Esophagus squamous epithelium (tissue), 5 donors: ENCODE measurements at regions of chr15 and their contacts with region 1.

Region 1: GRCh38 chr15:98779463-98780071 is 131.2 kb downstream of the IGF1R start:
- DNase-seq: no peak
- H3K4me3 ChIP-seq: no peak overlapping the region
- H3K27ac ChIP-seq: peak overlapping the region in 3 of 4 donors; percentile 3 to 34 (median 14)
- H3K4me1 ChIP-seq: peaks cover 7 to 57% (median 32%) of the 10 kb centered on the region in 3 donors
- H3K27me3 ChIP-seq: no peaks in the 10 kb centered on the region
- CTCF ChIP-seq: peak; percentile 63 to 94 (median 88)
- POLR2A ChIP-seq: no peak

Region 2: DNA sequence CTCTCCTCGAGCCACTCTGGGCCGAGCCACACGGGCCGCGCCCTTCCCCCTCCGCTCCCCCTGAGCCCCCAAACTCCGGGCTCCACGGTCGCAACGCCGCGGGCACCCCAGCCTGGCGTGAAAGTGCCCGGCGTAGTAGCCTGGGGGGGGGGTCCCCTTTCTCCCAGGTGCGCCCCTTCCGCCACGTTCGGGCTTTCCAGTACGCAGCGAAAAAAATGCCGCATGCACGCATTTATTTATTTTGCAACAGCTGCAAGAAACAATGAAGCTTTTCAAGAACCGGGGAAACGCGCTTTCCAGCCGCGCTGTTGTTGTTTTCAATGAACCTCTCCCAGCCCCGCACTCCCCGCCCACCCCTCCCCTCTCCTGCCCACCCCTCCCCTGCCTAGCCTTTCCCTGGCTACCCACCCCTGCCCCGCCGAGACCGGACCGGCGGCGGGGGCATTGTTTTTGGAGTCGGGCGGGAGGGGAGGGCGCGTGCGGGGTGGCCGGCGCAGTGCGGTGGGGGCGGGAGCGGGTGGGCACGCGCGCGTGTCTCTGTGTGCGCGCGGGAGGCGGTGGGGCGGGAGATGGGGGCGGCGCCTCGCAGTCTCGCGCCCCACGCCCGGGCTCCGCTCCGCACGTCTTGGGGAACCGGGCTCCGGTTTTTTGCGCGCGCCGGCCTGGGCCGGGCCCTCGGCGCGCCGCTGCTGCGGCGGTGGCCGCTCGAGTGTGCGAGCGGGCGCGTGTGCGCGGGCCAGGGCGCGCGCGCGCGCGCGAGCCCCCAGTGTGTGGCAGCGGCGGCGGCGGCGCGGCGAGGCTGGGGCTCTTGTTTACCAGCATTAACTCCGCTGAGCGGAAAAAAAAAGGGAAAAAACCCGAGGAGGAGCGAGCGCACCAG is 131.6 kb before region 1 on chr15 and contains the start of gene IGF1R:
- intact Hi-C with region 1: no loop called
- DNase-seq: peak; percentile 25
- H3K4me3 ChIP-seq: peak within 1 kb of the TSS; percentile 69 to 93 (median 82)
- H3K27ac ChIP-seq: peak within 1 kb of the TSS; percentile 91 to 98 (median 96)
- H3K4me1 ChIP-seq: peaks cover 0 to 47% (median 10%) of the 10 kb centered on the region in 3 donors
- H3K27me3 ChIP-seq: peaks cover 0 to 33% (median 0%) of the 10 kb centered on the region in 4 donors
- CTCF ChIP-seq: peak in 1 of 6 experiments; percentile 14
- POLR2A ChIP-seq: peak in 2 of 4 donors; percentile 53 to 58
- total RNA-seq, gene IGF1R: 20.5 to 54.8 (median 40.4) TPM

Region 3: GRCh38 chr15:98668566-98669308 is 110.8 kb before region 1 on chr15:
- intact Hi-C with region 1: loop called (anchors 10 kb)
- DNase-seq: no peak
- H3K4me3 ChIP-seq: peak overlapping the region in 1 of 4 donors; percentile 7
- H3K27ac ChIP-seq: peak overlapping the region; percentile 55 to 78 (median 71)
- H3K4me1 ChIP-seq: peaks cover 17 to 82% (median 51%) of the 10 kb centered on the region in 3 donors
- H3K27me3 ChIP-seq: no peaks in the 10 kb centered on the region
- CTCF ChIP-seq: no peak
- POLR2A ChIP-seq: no peak

Region 4: GRCh38 chr15:98845107-98845884 is 65.7 kb after region 1 on chr15:
- intact Hi-C with region 1: loop called (anchors 10 kb)
- DNase-seq: no peak
- H3K4me3 ChIP-seq: no peak overlapping the region
- H3K27ac ChIP-seq: no peak overlapping the region
- H3K4me1 ChIP-seq: peaks cover 2 to 43% (median 7%) of the 10 kb centered on the region in 3 donors
- H3K27me3 ChIP-seq: no peaks in the 10 kb centered on the region
- CTCF ChIP-seq: no peak
- POLR2A ChIP-seq: no peak

Region 5: GRCh38 chr15:98904544-98904943 is 125.0 kb after region 1 on chr15:
- intact Hi-C with region 1: loop called (anchors 10 kb)
- DNase-seq: no peak
- H3K4me3 ChIP-seq: no peak overlapping the region
- H3K27ac ChIP-seq: peak overlapping the region; percentile 13 to 84 (median 67)
- H3K4me1 ChIP-seq: peaks cover 21 to 88% (median 52%) of the 10 kb centered on the region in 3 donors
- H3K27me3 ChIP-seq: no peaks in the 10 kb centered on the region
- CTCF ChIP-seq: peak in 5 of 6 experiments; percentile 21 to 54 (median 46)
- POLR2A ChIP-seq: no peak